Transverse colon (tissue), 4 donors: ENCODE measurements at regions of chr11 and their contacts with region 1.

Region 1: GRCh38 chr11:3057069-3057963 is at the start of gene CARS1:
- DNase-seq: peak; percentile 97
- H3K4me3 ChIP-seq: peak within 1 kb of the TSS; percentile 84 to 94 (median 88)
- H3K27ac ChIP-seq: peak within 1 kb of the TSS; percentile 86 to 93 (median 90)
- H3K4me1 ChIP-seq: peaks cover 11 to 24% (median 17%) of the 10 kb centered on the region in 4 donors
- H3K27me3 ChIP-seq: no peaks in the 10 kb centered on the region
- CTCF ChIP-seq: no peak
- EP300 ChIP-seq: peak; percentile 51
- POLR2A ChIP-seq: peak; percentile 73
- total RNA-seq, gene CARS1: 37.0 to 61.3 (median 52.3) TPM

Region 2: GRCh38 chr11:2930704-2931428 is 126.5 kb before region 1 on chr11:
- in situ Hi-C with region 1: no loop called
- intact Hi-C with region 1: no loop called
- DNase-seq: peak; percentile 93
- H3K4me3 ChIP-seq: peak overlapping the region in 3 of 4 donors; percentile 40 to 69 (median 51)
- H3K27ac ChIP-seq: peak overlapping the region; percentile 82 to 90 (median 84)
- H3K4me1 ChIP-seq: peaks cover 16 to 32% (median 27%) of the 10 kb centered on the region in 4 donors
- H3K27me3 ChIP-seq: no peaks in the 10 kb centered on the region
- CTCF ChIP-seq: peak; percentile 68 to 96 (median 82)
- EP300 ChIP-seq: no peak
- POLR2A ChIP-seq: no peak

Region 3: GRCh38 chr11:2992234-2992996 is 64.9 kb before region 1 on chr11 and contains the start of gene NAP1L4:
- in situ Hi-C with region 1: loop called in 1 of 4 experiments (anchors 10 kb)
- intact Hi-C with region 1: no loop called
- DNase-seq: peak; percentile 97
- H3K4me3 ChIP-seq: peak within 1 kb of the TSS; percentile 88 to 93 (median 90)
- H3K27ac ChIP-seq: peak within 1 kb of the TSS; percentile 97 to 98 (median 98)
- H3K4me1 ChIP-seq: peaks cover 27 to 47% (median 34%) of the 10 kb centered on the region in 4 donors
- H3K27me3 ChIP-seq: no peaks in the 10 kb centered on the region
- CTCF ChIP-seq: no peak
- EP300 ChIP-seq: no peak
- POLR2A ChIP-seq: peak; percentile 59
- total RNA-seq, gene NAP1L4: 63.6 to 140 (median 111) TPM

Region 4: GRCh38 chr11:3021125-3021524 is 36.2 kb before region 1 on chr11:
- in situ Hi-C with region 1: no loop called
- intact Hi-C with region 1: no loop called
- DNase-seq: peak; percentile 61
- H3K4me3 ChIP-seq: no peak overlapping the region
- H3K27ac ChIP-seq: no peak overlapping the region
- H3K4me1 ChIP-seq: peaks cover 0 to 15% (median 5%) of the 10 kb centered on the region in 4 donors
- H3K27me3 ChIP-seq: no peaks in the 10 kb centered on the region
- CTCF ChIP-seq: peak; percentile 35 to 70 (median 61)
- EP300 ChIP-seq: no peak
- POLR2A ChIP-seq: no peak

Region 5: DNA sequence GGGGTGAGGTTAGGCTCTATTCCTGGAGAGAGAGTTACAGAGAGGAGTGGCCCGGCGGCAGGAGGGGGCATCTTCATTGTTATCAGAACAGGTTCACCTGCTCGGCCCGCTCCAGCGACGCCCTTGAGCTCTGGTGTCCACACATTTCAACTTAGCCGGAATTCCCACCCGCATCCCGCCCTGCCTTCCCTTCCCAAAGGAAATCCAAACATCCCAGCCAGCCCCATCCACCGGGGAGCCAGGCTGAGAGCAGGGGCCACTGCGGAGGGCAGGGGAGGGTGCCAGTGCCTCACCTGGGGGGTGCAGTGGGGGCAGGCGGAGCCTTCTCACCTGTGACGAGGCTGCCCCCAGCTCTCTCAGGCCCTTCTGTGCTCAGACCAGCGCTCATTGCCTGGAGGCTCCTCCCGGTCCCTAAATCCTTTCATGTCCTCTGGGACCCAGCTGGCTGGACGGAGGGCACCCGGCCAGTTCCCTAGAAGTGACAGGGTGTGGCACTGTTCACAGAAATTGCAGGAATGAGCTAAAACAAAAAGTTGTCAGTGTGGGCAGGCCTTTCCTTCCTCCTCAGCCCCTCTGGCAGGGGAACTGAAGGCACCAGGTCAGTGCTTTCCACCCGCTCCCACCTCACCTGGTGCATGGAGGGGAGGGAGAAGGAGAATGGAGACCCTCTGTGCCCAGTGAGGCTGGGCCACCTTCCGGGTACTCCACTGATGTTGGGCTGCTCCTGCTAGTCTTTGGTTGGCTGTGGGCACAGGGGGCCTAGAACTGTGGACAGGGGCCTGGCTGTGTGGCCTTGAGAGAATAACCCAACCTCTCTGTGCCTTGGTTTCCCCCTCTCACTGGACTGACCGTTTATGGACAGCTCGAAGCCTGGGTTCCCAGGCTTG is 163.4 kb after region 1 on chr11:
- in situ Hi-C with region 1: no loop called
- intact Hi-C with region 1: no loop called
- DNase-seq: peak; percentile 7
- H3K4me3 ChIP-seq: no peak overlapping the region
- H3K27ac ChIP-seq: no peak overlapping the region
- H3K4me1 ChIP-seq: peaks cover 0 to 7% (median 0%) of the 10 kb centered on the region in 4 donors
- H3K27me3 ChIP-seq: peaks cover 80% of the 10 kb centered on the region
- CTCF ChIP-seq: no peak
- EP300 ChIP-seq: no peak
- POLR2A ChIP-seq: no peak